ENCODE measurements at regions of chr3 and their contacts with region 1.

Region 1: GRCh38 chr3:195259475-195260279 is 11.3 kb downstream of the XXYLT1 start:
- DNase-seq: peak; percentile 95
- H3K4me3 ChIP-seq: peak overlapping the region; percentile 76
- H3K27ac ChIP-seq: peak overlapping the region; percentile 93
- H3K4me1 ChIP-seq: peaks cover 60% of the 10 kb centered on the region
- H3K27me3 ChIP-seq: no peaks in the 10 kb centered on the region
- CTCF ChIP-seq: peak; percentile 34; the same call in 1 of the 2 replicates

Region 2: GRCh38 chr3:194333212-194333980 is 926.3 kb before region 1 on chr3:
- CTCF ChIA-PET with region 1: no interaction called
- POLR2A ChIA-PET with region 1: no interaction called
- intact Hi-C with region 1: loop called (anchors 10 kb)
- DNase-seq: peak; percentile 93
- H3K4me3 ChIP-seq: peak overlapping the region; percentile 57
- H3K27ac ChIP-seq: peak overlapping the region; percentile 21
- H3K4me1 ChIP-seq: peaks cover 20% of the 10 kb centered on the region
- H3K27me3 ChIP-seq: no peaks in the 10 kb centered on the region
- CTCF ChIP-seq: peak; percentile 98

Region 3: GRCh38 chr3:194720048-194720447 is 539.6 kb before region 1 on chr3:
- CTCF ChIA-PET with region 1: no interaction called
- POLR2A ChIA-PET with region 1: no interaction called
- intact Hi-C with region 1: no loop called
- DNase-seq: no peak
- H3K4me3 ChIP-seq: no peak overlapping the region
- H3K27ac ChIP-seq: no peak overlapping the region
- H3K4me1 ChIP-seq: no peaks in the 10 kb centered on the region
- H3K27me3 ChIP-seq: no peaks in the 10 kb centered on the region
- CTCF ChIP-seq: no peak

Region 4: DNA sequence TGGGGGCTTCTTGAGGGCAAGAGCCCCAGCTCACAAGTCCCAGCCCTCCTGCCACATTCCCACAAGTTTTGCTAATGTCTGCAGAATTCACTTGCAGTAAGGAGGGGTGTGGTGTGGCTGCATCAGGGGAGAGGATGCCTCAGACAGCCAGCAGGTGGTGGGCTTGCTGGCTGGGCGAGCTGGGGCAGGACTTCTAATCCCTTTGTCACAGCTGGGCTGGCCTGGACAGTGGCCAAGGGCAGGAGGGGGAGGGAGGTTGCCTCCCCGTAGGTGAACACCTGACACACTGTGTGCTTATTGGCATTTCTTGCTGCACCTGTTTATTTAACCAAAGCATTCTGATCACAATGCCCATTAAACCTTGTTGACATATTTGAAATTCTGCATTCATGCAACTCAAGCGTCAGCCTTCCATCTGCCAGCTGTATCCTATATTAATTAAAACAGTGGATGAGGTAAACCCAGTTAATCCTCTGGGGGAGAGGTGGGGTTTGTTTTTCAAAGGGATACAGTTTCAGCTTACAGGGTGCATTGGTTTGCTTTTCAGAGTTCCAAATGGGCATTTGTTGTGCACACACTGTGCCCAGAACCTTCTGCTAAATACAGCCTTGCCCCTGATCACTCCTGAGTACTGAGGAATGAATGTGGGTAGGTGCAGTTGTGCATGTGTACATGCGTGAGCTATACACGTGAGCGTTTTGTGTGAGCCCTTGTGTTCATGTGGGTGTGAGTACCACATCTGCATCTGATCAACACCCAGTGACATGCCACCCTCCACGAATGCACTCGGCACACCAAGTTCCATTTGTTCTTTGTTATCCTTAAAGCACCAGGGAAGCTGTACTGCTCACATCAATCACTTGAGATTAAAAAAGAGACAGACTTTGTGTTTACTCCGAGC is 257.5 kb before region 1 on chr3:
- CTCF ChIA-PET with region 1: no interaction called
- POLR2A ChIA-PET with region 1: no interaction called
- intact Hi-C with region 1: loop called (anchors 5 kb)
- DNase-seq: peak; percentile 89
- H3K4me3 ChIP-seq: peak overlapping the region; percentile 18
- H3K27ac ChIP-seq: peak overlapping the region; percentile 96
- H3K4me1 ChIP-seq: peaks cover 47% of the 10 kb centered on the region
- H3K27me3 ChIP-seq: no peaks in the 10 kb centered on the region
- CTCF ChIP-seq: peak; percentile 88

Region 5: DNA sequence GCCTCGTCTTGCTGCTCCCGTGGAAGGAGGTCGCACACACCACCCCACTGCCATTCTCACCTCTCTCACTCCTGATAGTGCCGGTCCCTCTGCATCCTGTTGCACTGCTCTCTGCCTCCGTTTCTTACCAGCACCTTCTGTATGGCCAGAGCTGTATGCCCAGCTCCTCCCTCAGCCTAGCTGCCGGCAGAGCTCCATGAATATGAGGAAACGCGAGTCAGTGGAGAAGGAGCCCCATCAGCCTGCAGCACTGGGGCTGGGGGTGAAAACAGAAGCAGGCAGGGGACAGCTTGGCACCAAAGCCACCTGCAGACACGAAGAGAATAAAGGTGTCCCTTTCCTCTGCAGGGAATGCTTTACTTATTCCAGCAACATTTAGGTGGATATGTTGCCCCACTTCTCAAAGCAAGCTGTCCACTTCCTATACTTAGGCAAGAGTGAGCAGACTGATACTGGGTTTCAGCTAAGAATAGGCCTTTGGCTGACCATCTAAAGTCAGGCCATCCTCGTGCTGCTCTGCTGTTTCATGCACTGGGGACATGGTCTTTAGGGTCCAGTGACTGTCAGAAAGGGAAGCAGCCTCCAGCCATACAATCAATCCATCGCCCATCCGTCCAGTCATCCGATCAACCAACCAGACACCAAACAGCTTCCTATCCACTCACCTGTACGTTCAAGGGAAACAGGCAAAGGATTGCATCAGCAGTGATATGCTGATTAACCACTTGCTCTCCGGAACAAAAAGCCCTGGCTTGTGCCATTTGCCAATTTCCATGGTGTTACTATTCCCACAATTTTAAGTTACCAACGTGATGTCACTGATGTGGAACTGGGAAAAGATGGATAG is 211.4 kb before region 1 on chr3:
- CTCF ChIA-PET with region 1: no interaction called
- POLR2A ChIA-PET with region 1: no interaction called
- intact Hi-C with region 1: no loop called
- DNase-seq: no peak
- H3K4me3 ChIP-seq: no peak overlapping the region
- H3K27ac ChIP-seq: no peak overlapping the region
- H3K4me1 ChIP-seq: no peaks in the 10 kb centered on the region
- H3K27me3 ChIP-seq: no peaks in the 10 kb centered on the region
- CTCF ChIP-seq: no peak

Region 6: DNA sequence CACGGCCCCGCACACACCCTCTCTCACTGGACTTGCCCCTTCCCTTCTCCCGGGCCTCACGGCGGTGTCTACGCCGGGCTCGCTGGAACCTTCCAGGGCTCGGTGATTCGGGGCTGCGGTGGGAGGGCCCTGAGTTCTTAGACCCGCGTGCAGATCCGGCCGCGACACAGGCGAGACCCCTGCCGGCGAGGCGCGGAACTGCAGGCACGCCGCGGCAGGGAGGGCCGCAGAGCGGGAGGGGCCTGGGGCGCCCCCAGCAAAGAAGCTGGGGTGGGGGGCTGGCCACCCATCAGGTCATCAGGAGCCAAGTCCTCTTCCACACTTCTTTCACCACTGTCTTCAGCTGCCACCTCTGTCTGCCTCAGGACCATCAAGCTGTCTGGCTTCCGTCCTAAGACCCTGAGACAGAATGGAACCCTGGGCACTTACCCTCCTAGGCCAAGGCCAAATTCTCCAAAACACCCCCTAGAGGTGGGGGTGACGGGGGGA is 153.2 kb before region 1 on chr3:
- CTCF ChIA-PET with region 1: no interaction called
- POLR2A ChIA-PET with region 1: no interaction called
- intact Hi-C with region 1: loop called (anchors 5 kb)
- DNase-seq: peak; percentile 78
- H3K4me3 ChIP-seq: no peak overlapping the region
- H3K27ac ChIP-seq: no peak overlapping the region
- H3K4me1 ChIP-seq: peaks cover 49% of the 10 kb centered on the region
- H3K27me3 ChIP-seq: no peaks in the 10 kb centered on the region
- CTCF ChIP-seq: peak; percentile 98

Region 7: GRCh38 chr3:195150181-195151118 is 109.2 kb before region 1 on chr3:
- CTCF ChIA-PET with region 1: no interaction called
- POLR2A ChIA-PET with region 1: no interaction called
- intact Hi-C with region 1: loop called (anchors 2 kb)
- DNase-seq: peak; percentile 97
- H3K4me3 ChIP-seq: peak overlapping the region; percentile 18
- H3K27ac ChIP-seq: peak overlapping the region; percentile 86
- H3K4me1 ChIP-seq: peaks cover 75% of the 10 kb centered on the region
- H3K27me3 ChIP-seq: no peaks in the 10 kb centered on the region
- CTCF ChIP-seq: no peak

Region 8: DNA sequence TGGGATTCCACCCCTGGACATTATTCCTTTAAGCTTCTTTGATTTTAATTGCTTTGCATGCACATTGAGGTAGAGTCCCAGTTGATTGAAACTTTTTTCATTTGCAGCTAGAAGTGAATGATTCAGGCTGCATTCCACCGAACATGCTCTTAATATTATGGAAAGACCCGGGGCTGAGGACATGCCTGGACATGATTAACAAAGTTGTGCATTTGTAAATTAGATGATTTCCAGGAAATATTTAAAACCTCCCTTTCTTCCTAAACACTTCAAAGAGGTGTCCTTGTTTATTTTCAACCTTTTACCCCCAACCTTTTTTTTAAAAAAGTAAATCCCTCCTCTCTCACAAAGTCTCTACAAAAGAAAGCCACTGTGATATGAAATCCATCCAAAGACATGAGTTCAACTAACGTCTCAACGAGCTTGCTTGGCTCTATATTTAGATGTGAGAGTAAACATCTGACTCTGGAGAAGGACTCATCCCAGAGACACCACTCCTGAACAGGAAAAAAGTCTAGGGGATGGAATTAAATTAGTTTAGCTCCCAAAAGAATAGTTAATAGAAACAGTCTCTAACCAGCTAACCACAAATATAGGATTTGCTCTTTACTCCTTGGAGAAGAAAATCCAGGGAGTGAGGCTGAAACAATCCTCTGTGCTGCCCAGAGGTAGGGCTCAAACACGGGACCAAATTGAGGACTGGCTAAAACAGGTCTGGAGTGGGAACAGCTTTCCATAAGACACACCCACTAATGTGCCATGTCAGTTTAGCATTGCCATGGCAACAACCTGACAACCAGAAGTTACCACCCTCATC is 71.9 kb before region 1 on chr3:
- CTCF ChIA-PET with region 1: no interaction called
- POLR2A ChIA-PET with region 1: interaction called, 4 read pairs
- intact Hi-C with region 1: loop called (anchors 2 kb)
- DNase-seq: peak; percentile 54
- H3K4me3 ChIP-seq: no peak overlapping the region
- H3K27ac ChIP-seq: peak overlapping the region; percentile 83
- H3K4me1 ChIP-seq: peaks cover 67% of the 10 kb centered on the region
- H3K27me3 ChIP-seq: no peaks in the 10 kb centered on the region
- CTCF ChIP-seq: no peak

Region 9: DNA sequence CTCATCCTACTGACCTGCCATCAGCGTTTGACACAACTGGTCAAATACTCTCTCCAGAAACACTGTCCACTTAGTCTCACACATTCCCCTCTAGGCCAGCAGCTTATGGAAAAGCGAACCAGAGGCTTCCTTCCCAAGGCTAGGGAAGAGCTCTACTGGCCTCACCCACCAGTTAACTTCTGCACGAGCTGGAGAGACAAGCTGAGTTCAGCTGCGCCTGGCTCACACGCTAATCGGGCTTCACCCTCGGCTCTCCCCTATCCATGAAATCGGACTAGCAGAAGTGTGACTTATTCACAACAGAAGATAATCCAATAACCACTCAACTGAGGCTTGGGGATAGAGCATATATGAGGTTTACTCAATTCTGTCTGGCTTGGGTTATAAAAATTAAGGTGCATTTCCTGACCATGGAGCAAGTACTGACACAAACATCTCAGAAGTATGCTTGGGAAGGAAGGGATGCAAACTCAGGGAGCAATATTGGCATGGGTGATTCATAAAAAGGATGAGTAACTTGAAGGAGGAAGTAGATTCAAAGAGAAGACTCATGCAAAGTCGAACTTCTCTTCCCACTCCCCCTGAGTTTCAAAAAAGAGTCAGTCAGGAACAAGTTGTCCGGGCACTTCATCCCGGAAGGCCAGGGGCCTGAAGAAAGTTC is 61.8 kb before region 1 on chr3:
- CTCF ChIA-PET with region 1: no interaction called
- POLR2A ChIA-PET with region 1: interaction called, 13 read pairs
- intact Hi-C with region 1: no loop called
- DNase-seq: peak; percentile 84
- H3K4me3 ChIP-seq: no peak overlapping the region
- H3K27ac ChIP-seq: peak overlapping the region; percentile 73
- H3K4me1 ChIP-seq: peaks cover 56% of the 10 kb centered on the region
- H3K27me3 ChIP-seq: no peaks in the 10 kb centered on the region
- CTCF ChIP-seq: no peak